Gastrocnemius medialis (tissue), 4 donors: ENCODE measurements at regions of chr6 and their contacts with region 1.

Region 1: DNA sequence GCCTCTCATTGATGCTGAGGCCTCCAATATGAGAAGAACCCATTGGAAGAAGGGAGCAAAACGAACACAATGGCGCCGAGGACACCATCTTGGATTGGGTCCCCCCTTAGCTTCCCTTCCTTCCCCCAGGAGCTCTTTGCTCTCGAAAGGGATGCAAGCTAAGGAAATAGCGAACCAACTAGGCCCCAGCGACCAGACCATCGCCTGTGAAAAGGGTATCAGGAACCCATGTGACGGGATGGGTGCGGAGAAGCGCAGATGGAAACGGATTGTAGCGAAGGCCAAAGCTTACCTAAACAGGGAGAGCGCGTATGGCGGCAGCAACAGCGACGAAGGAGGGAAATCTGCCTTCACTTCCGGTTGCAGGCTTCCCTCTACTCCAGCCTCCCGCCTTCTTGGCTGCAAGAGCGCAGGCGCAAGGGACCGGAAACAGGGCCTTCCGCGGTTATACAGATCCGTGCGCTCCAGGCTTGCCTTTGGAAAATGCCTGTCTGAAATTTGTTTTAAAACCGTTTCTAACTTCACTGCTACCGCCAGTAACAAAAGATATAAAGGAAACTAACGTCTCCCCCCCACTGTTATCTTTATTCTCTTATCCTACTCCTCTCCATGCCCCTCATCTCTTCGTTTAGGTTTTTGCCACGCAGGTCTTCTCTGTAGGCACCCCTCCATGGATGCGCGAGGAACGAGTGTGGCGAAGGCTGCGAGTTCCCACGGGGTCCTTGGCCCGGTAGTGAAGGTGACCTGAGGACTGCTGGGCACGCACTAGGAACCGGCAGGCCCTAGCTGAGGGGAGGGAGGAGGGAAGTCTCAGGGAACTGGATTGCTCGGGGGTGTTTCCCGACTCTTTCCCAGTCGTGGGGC is at the start of gene DDX39B:
- DNase-seq: peak; percentile 96 to 97
- ATAC-seq: peak; percentile 94 to 95
- H3K4me3 ChIP-seq: peak within 1 kb of the TSS; percentile 81 to 91 (median 85)
- H3K27ac ChIP-seq: peak within 1 kb of the TSS; percentile 96 to 98 (median 96)
- H3K4me1 ChIP-seq: peaks cover 31 to 38% of the 10 kb centered on the region in 2 donors
- H3K27me3 ChIP-seq: no peaks in the 10 kb centered on the region
- CTCF ChIP-seq: no peak
- POLR2A ChIP-seq: peak; percentile 72 to 77
- total RNA-seq, gene DDX39B: 107 to 198 (median 144) TPM

Region 2: DNA sequence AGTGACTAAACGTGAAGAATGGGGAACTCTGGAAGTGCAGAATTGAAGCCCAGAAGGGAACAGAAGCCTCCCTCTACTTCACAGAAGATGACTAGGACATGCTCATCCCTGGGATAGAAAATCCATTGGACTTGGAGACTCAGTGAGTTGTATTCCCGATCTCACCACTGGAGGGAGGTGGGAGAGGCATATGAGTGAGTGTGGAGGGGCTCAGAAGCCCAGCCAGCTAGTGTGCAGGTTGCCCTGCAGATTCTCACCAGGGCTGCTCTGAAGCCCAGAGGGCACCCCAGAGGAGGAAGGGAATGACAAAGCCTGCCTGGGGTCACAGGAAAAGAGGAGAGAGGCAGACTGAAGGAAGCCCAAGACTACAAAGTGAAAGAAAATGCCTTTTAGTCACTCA is 1094.7 kb before region 1 on chr6:
- in situ Hi-C with region 1: no loop called
- intact Hi-C with region 1: no loop called
- DNase-seq: no peak
- ATAC-seq: no peak
- H3K4me3 ChIP-seq: no peak overlapping the region
- H3K27ac ChIP-seq: no peak overlapping the region
- H3K4me1 ChIP-seq: peaks cover 4 to 9% of the 10 kb centered on the region in 2 donors
- H3K27me3 ChIP-seq: peaks cover 29 to 74% (median 74%) of the 10 kb centered on the region in 3 donors
- CTCF ChIP-seq: no peak
- POLR2A ChIP-seq: no peak

Region 3: GRCh38 chr6:30556066-30556905 is 985.6 kb before region 1 on chr6 and contains the start of gene GNL1:
- in situ Hi-C with region 1: no loop called
- intact Hi-C with region 1: loop called (anchors 2 kb)
- DNase-seq: peak; percentile 80 to 92
- ATAC-seq: peak; percentile 77 to 79
- H3K4me3 ChIP-seq: peak within 1 kb of the TSS; percentile 87 to 99 (median 96)
- H3K27ac ChIP-seq: peak within 1 kb of the TSS; percentile 91 to 99 (median 95)
- H3K4me1 ChIP-seq: peaks cover 11 to 18% of the 10 kb centered on the region in 2 donors
- H3K27me3 ChIP-seq: no peaks in the 10 kb centered on the region
- CTCF ChIP-seq: peak in 1 of 5 experiments; percentile 15
- POLR2A ChIP-seq: peak; percentile 34 to 38
- total RNA-seq, gene GNL1: 13.2 to 16.0 (median 14.9) TPM

Region 4: GRCh38 chr6:31180502-31180901 is 361.4 kb before region 1 on chr6:
- in situ Hi-C with region 1: no loop called
- intact Hi-C with region 1: no loop called
- DNase-seq: peak; percentile 15 to 83
- ATAC-seq: peak; percentile 74 to 99
- H3K4me3 ChIP-seq: peak overlapping the region in 3 of 4 donors; percentile 3 to 49 (median 43)
- H3K27ac ChIP-seq: peak overlapping the region in 2 of 4 donors; percentile 24 to 67
- H3K4me1 ChIP-seq: peaks cover 5 to 6% of the 10 kb centered on the region in 2 donors
- H3K27me3 ChIP-seq: no peaks in the 10 kb centered on the region
- CTCF ChIP-seq: no peak
- POLR2A ChIP-seq: no peak

Region 5: GRCh38 chr6:31597006-31597405 is 55.1 kb after region 1 on chr6:
- in situ Hi-C with region 1: loop called (anchors 5 to 10 kb)
- intact Hi-C with region 1: loop called (anchors 1 kb)
- DNase-seq: no peak
- ATAC-seq: no peak
- H3K4me3 ChIP-seq: no peak overlapping the region
- H3K27ac ChIP-seq: no peak overlapping the region
- H3K4me1 ChIP-seq: no peaks in the 10 kb centered on the region
- H3K27me3 ChIP-seq: no peaks in the 10 kb centered on the region
- CTCF ChIP-seq: peak in 2 of 5 experiments; percentile 18 to 44
- POLR2A ChIP-seq: no peak

Region 6: GRCh38 chr6:31652925-31653718 is 111.2 kb after region 1 on chr6:
- in situ Hi-C with region 1: no loop called
- intact Hi-C with region 1: loop called (anchors 1 kb)
- DNase-seq: peak; percentile 81 to 88
- ATAC-seq: peak; percentile 83 to 87
- H3K4me3 ChIP-seq: peak overlapping the region; percentile 79 to 90 (median 84)
- H3K27ac ChIP-seq: peak overlapping the region; percentile 95 to 99 (median 98)
- H3K4me1 ChIP-seq: peaks cover 23 to 24% of the 10 kb centered on the region in 2 donors
- H3K27me3 ChIP-seq: no peaks in the 10 kb centered on the region
- CTCF ChIP-seq: no peak
- POLR2A ChIP-seq: peak; percentile 55 to 78

Region 7: DNA sequence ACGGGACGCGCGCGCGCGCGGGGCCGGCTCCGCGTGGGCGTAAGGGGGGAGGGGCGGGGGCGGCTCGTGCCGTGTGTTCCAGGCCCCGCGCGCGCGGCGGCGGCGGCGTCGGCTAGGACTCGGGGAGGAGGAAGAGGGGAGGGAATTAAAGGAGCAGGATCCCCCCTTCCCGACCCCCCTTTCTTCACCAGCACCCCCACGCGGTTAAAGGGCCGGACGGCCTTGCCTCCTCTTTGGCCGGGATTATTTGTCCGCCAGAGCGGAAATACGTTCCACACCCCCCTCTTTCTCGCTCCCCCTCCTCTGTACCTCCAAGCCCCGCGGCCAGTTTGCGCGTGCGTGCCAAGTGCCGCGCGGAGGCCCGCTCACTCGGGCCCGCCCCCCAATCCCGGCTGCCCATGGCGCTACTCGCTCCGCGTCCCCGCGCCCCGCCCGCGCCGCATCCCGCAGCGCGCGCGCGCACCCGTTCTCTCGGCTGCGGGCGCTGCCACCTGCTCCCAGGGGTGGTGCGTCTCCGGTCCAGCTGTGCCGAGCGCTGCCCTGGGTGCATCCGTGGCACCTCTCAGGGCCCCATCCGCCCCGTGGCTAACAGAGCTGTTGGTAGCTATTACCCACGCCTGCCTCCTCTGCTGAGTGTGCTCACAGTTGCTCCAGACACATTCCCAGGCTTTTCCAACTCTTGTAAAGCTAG is 360.2 kb after region 1 on chr6 and contains the start of gene ZBTB12:
- in situ Hi-C with region 1: no loop called
- intact Hi-C with region 1: loop called (anchors 10 kb)
- DNase-seq: peak; percentile 78 to 82
- ATAC-seq: peak; percentile 58 to 65
- H3K4me3 ChIP-seq: peak within 1 kb of the TSS; percentile 56 to 93 (median 80)
- H3K27ac ChIP-seq: peak within 1 kb of the TSS; percentile 78 to 89 (median 86)
- H3K4me1 ChIP-seq: peaks cover 15 to 19% of the 10 kb centered on the region in 2 donors
- H3K27me3 ChIP-seq: no peaks in the 10 kb centered on the region
- CTCF ChIP-seq: peak in 1 of 5 experiments; percentile 20
- POLR2A ChIP-seq: peak; percentile 22 to 33
- total RNA-seq, gene ZBTB12: 0.26 TPM in 1 of 4 donors, not detected in the others